PC-9 (cell line): ENCODE measurements at regions of chr1 and their contacts with region 1.

Region 1: GRCh38 chr1:115337633-115338456 is at the start of gene NGF:
- DNase-seq: peak; percentile 52 to 63
- H3K4me3 ChIP-seq: peak within 1 kb of the TSS; percentile 93
- H3K27ac ChIP-seq: peak within 1 kb of the TSS; percentile 38
- H3K4me1 ChIP-seq: peaks cover 38% of the 10 kb centered on the region
- H3K27me3 ChIP-seq: no peaks in the 10 kb centered on the region
- CTCF ChIP-seq: no peak
- total RNA-seq, gene NGF: 5.5 and 9.7 TPM in 2 replicates

Region 2: DNA sequence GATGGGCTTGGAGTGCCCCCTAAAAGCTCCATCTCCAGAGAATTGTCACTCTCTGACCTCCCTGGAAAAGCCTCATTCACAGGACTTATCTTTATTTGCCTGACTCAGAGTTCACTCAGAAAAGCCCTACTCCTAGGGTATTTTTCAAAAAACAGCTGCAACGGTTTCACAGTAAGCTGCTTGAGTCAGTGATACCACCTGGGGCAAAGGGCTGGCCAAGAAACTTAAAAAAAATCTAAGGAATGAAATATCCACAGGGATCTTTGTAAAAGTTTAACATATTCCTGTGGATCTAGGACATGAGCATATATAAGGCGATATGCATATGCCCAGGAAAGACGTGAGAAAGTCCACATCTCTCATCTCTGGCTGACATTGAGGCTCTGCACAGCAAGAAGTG is 214.7 kb before region 1 on chr1:
- CTCF ChIA-PET with region 1: interaction called, 10 read pairs
- POLR2A ChIA-PET with region 1: no interaction called
- intact Hi-C with region 1: no loop called
- DNase-seq: no peak
- H3K4me3 ChIP-seq: no peak overlapping the region
- H3K27ac ChIP-seq: no peak overlapping the region
- H3K4me1 ChIP-seq: peaks cover 9% of the 10 kb centered on the region
- H3K27me3 ChIP-seq: no peaks in the 10 kb centered on the region
- CTCF ChIP-seq: no peak

Region 3: DNA sequence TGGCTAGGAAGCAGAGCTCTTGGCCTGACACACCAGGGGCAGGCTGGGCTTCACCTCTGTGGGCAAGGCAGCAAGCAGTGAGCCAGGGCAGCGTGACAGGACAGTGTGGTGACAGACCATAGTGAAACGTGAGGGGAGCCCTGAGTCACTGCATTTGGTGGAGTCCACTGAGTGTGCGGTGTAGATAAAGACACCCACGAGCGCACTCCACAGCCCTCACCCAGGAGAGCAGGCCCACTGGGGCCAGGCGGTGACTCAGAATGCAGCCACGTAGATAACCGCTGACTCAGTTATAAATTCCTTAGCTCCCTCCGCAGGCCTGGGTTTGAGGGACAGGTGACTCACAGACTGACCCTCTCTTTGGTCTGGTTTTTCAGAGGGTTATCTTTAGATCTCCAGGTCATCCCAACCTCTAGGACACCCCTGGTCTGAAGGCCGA is 158.4 kb before region 1 on chr1:
- CTCF ChIA-PET with region 1: no interaction called
- POLR2A ChIA-PET with region 1: no interaction called
- intact Hi-C with region 1: loop called (anchors 5 kb)
- DNase-seq: peak; percentile 92 to 100
- H3K4me3 ChIP-seq: no peak overlapping the region
- H3K27ac ChIP-seq: peak overlapping the region; percentile 89
- H3K4me1 ChIP-seq: peaks cover 57% of the 10 kb centered on the region
- H3K27me3 ChIP-seq: no peaks in the 10 kb centered on the region
- CTCF ChIP-seq: no peak

Region 4: DNA sequence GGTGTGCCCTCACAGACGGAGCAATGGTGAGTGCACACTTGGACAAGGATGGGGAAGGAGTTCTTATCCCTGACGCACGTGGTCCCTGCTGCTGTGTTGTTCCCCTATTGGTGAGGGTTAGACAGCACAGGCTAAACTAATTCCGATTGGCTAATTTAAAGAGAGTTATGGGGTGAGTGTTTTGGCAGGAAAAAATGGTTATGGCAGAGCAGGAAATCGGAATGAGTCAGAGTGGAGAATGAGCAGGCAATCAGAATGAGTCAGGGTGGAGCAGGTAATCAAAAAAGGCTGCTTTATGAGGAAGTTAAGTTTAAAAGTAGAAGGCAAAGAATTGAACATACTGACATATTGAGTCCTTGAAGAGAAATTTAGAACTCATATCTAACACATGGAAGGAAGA is 100.3 kb before region 1 on chr1:
- CTCF ChIA-PET with region 1: no interaction called
- POLR2A ChIA-PET with region 1: no interaction called
- intact Hi-C with region 1: no loop called
- DNase-seq: no peak
- H3K4me3 ChIP-seq: no peak overlapping the region
- H3K27ac ChIP-seq: no peak overlapping the region
- H3K4me1 ChIP-seq: peaks cover 20% of the 10 kb centered on the region
- H3K27me3 ChIP-seq: no peaks in the 10 kb centered on the region
- CTCF ChIP-seq: no peak

Region 5: GRCh38 chr1:115302390-115302961 is 35.4 kb before region 1 on chr1:
- CTCF ChIA-PET with region 1: no interaction called
- POLR2A ChIA-PET with region 1: interaction called, 43 read pairs
- intact Hi-C with region 1: no loop called
- DNase-seq: peak in 1 of 2 experiments; percentile 46
- H3K4me3 ChIP-seq: no peak overlapping the region
- H3K27ac ChIP-seq: no peak overlapping the region
- H3K4me1 ChIP-seq: peaks cover 10% of the 10 kb centered on the region
- H3K27me3 ChIP-seq: no peaks in the 10 kb centered on the region
- CTCF ChIP-seq: no peak

Region 6: GRCh38 chr1:115402753-115403184 is 64.9 kb after region 1 on chr1:
- CTCF ChIA-PET with region 1: no interaction called
- POLR2A ChIA-PET with region 1: interaction called, 12 read pairs
- intact Hi-C with region 1: no loop called
- DNase-seq: no peak
- H3K4me3 ChIP-seq: no peak overlapping the region
- H3K27ac ChIP-seq: no peak overlapping the region
- H3K4me1 ChIP-seq: no peaks in the 10 kb centered on the region
- H3K27me3 ChIP-seq: no peaks in the 10 kb centered on the region
- CTCF ChIP-seq: no peak

Region 7: DNA sequence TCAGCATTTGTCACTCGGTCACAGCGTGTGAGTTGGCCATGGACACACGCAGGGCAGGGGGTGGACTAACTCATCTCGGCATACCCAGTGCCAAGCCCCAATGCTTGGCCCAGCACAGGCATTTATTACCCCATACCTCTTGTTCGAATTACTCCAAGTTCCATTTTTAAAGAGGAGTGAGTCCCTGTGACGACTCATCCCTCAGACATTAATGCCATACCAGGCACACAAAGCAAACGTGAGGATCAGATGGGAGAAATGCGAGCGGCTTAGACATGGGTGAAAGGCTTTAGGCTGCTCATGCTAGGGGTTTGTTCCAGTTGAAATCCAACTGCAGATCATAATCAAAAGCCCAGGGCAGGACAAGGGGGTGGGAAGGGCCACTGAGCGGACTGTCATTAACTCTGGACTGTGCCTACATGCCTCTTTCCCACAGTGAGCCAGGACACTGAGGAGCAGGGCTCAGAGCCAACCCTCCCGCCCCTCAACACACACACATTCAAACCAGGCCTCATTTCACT is 118.7 kb after region 1 on chr1:
- CTCF ChIA-PET with region 1: no interaction called
- POLR2A ChIA-PET with region 1: no interaction called
- intact Hi-C with region 1: loop called (anchors 5 kb)
- DNase-seq: peak; percentile 41 to 65
- H3K4me3 ChIP-seq: no peak overlapping the region
- H3K27ac ChIP-seq: no peak overlapping the region
- H3K4me1 ChIP-seq: peaks cover 54% of the 10 kb centered on the region
- H3K27me3 ChIP-seq: no peaks in the 10 kb centered on the region
- CTCF ChIP-seq: no peak